ENCODE measurements at regions of chr1 and their contacts with region 1.

Region 1: DNA sequence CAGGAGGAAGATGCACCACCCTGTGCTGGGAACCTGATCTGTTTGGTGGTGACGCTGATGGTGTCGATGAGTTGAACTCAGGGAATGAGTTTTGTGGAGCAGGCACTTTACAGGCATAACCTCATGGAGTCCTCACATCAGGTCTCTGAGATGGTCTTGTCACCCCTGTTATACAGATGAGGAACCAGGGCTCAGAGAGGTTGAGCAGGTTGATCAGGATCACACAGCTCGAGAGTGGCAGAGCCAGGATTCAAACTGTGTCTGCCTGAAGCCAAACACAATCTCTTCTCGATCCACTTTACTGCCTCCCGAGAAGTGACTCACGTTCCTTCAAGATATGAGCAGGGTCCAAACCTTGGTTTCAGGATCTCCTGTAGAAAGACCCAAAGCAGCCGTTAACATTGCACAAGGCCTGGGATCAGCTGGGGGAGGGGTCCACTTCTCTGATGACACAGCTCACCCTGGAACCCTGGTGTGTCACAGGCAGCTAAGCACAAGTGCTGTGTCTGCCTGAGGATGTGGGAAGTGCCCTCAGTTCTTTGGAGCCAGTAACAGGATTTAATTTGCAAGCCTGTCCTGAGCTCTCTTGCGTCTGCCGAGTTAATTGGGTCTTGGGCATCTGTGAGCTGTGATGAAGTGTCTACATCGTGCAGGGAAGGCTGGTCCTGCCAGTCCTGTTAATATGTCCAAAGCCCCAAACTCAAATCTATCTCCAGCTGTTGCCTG is 65.4 kb upstream of the STUM start:
- DNase-seq: no peak
- CTCF ChIP-seq: no peak

Region 2: GRCh38 chr1:226424228-226425003 is 58.7 kb before region 1 on chr1:
- in situ Hi-C with region 1: loop called (anchors 10 kb)
- DNase-seq: peak; percentile 58
- CTCF ChIP-seq: peak; percentile 56

Region 3: DNA sequence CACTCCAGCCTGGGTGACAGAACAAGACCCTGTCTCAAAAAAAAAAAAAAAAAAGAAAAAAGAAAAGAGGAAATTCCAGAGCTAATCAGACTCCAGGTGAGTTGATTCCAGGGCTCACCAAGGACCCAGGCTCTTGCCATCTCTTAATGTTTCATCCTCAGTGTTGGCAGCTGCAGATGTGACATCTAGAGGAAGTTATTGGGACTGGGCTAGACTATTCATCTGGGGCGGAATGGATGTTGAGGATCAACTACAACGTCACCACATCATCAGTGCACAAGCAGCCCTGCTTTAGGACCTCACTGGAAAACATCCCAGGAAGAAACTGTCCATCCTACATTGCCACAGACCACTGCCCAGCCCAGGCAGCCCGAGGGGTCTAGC is 46.7 kb before region 1 on chr1:
- in situ Hi-C with region 1: no loop called
- DNase-seq: no peak
- CTCF ChIP-seq: no peak

Region 4: DNA sequence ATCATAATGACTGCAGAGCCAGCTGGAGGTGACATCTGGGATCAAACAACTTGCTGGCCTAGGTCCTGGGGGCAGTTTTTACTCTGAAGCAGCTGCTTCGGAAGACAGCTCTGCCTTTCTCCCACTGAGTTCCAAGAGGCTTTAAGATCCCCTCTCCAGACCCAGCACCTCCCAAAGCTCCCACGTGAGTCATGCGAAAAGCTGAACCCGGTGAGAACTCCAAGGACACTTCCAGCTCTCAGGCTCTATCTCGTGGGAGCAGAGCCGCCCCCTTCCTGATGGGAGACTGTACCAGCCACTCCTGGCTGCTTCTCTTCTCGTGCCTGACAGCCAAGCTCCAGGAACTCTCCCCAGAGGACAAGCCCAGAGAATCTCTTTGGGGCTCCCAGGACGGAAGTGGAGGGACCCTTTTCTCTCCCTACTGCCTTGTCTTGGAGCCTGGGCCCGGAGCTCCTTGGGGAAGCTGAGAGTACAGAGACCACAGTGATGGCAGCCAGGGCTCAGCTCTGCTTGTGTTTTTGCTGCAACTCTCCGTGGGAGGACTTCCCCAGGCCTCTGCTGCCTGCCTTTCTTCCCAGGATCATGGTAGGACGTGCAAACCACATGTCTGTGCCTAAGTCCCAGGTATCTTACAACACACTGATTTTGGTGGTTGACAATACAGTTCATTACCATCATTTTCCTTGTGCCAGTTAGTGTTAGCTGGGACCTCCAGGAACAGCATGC is 106.0 kb after region 1 on chr1:
- in situ Hi-C with region 1: no loop called
- DNase-seq: no peak
- CTCF ChIP-seq: no peak

Measured in GM13977 (cell line).